ENCODE measurements at regions of chr1 and their contacts with region 1.

Region 1: DNA sequence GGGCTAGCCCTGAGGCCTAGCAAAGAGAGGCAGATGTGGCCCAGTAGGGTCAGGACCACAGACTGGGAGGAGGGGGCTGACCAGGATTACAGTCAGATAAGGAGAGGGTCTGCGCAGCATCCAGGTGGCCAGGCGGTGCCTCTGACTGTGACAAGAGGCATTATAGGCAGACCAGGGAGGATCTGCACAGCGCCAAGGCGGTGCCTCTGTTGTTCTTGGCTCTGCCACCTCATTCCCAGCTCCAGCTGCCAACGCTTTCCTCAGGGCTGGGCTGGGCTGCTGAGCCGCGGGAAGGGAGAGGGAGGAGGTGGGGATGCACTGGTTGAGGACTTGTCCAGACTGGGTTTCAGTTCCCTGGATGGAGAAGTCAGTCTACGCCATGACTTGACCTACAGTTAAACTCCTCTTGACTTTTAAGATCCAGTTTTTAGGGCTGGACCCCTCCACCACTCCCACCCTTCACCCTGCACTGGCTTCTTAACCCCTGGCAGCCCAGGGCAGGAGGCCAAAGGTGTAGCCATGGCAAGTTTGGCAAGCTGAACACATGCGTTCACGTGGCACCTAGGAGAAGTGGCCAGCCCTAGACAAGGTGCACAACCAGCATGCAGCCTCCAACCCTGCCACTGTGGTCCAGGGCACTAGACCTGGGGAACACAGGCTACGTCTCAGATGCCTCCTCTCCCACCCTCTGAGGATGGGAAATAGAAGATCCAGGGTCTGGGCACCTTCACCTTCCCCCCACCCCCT is 4.5 kb upstream of the CRABP2 start:
- DNase-seq: peak; percentile 81
- ATAC-seq: peak; percentile 74 to 80

Region 2: GRCh38 chr1:156407344-156407743 is 302.6 kb before region 1 on chr1:
- intact Hi-C with region 1: loop called in 1 of 2 experiments (anchors 10 kb)
- DNase-seq: no peak
- ATAC-seq: no peak

Region 3: DNA sequence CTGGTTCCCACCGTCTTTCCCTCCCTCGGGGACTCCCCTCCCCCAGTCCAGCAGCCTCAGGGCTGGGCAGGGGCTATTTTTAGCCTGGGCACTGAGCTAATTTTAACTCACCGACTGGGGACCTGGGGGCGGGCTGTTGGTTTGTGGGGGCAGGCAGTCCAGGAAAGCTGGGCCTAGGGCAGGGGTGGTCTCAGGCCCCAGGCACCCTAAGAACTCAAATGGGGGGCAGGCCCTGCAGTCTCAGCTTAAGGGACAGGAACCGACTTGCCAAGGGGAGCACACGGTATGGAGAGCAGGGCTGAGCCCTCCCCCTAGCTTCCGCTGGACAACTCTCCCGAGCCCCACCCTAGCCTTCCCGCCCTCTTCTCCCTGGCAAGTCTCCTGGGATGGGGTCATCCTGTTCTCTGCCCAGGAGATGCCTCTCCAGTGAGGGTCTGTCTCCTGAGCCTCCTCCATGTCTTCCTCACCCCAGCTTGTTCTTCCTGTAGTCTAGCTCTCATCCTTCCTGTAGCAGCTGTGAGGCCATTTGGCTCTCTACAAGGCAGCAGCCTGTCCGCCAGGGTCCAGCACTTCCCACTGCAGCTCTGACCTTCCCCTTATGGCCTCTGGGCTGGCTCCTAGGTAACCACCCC is 219.4 kb before region 1 on chr1:
- intact Hi-C with region 1: no loop called
- DNase-seq: peak; percentile 60
- ATAC-seq: peak; percentile 64 to 71

Region 4: DNA sequence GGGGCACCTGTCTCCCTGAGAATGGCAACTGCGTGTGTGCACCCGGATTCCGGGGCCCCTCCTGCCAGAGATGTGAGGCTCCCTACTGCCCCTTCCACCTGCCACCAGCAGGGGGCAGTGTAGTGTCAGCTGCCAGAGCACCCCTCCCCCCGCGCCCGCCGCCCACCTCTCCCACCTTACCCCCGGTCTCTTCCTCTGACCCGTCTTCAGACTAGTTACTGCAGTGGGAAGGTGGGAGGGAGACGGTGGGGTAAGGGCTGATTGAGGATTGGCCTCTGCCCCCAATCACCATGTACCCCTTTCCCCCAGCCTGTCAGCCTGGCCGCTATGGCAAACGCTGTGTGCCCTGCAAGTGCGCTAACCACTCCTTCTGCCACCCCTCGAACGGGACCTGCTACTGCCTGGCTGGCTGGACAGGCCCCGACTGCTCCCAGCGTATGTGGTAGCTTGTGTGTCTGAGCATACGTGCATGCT is 200.4 kb after region 1 on chr1:
- intact Hi-C with region 1: no loop called
- DNase-seq: peak; percentile 48
- ATAC-seq: peak in 1 of 2 donors; percentile 28

Measured in left cardiac atrium (tissue), 4 donors.